Head of caudate nucleus (tissue), 42 donors: ENCODE measurements at regions of chr3 and their contacts with region 1.

Region 1: DNA sequence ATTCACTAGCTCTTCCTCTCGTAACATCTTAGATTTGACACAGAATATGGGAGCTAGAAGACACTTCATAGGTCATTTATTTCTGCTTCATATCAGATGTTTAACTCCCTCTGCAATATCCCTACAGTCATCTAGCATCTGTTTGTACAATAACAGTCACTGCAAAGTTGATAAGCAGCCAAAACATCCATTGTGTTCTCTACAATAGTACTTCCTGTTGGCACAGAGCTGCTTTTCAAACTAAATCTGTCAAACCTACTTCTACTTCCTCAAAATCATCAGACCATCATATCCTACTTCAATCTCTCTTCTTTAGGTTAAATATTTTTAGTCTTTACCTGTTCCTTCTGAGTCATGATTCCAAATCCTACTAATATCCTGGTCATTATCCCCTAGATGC is 233.2 kb downstream of the FGF12 start:
- DNase-seq: no peak

Region 2: DNA sequence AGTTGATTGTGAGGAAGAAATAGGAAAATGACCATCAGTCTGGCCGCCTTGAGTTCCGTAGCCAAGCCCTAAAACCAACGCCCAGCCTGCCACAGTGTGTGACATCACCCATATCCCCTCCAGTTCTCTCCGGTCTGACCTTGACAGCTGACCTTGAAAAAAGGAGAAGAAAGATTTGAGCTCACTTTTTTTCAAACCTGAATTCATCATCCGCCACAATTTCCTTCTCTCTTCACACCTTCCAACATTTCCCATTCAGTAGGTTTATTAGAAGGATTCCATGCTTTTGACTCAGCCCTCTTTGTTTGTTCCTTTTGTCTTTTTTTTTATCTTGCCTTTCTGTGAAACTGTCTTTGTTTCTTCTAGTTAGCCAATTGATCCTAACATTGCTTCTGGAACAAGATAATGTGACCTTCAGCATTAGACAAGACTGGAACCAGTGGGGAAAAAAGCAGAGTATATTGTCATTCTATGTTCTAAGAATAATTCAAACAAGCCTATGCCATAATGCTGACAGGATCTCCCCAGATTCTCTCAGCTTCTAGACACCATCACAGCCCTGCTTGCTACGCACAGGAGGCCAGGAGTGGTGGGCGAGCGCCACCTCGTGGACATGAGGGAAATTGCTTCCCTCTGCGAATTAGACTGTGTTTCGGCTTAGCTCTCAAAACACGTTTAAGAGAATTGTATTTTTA is 49.9 kb before region 1 on chr3:
- intact Hi-C with region 1: no loop called
- DNase-seq: peak; percentile 53 to 92 (median 83)

Region 3: GRCh38 chr3:192505731-192506130 is 11.6 kb after region 1 on chr3:
- intact Hi-C with region 1: loop called (anchors 1 kb)
- DNase-seq: no peak

Region 4: GRCh38 chr3:193310914-193311723 is 816.9 kb after region 1 on chr3:
- intact Hi-C with region 1: no loop called
- DNase-seq: no peak